ENCODE measurements at regions of chr17 and their contacts with region 1.

Region 1: GRCh38 chr17:50547035-50547735 is at the start of gene SPATA20:
- DNase-seq: peak; percentile 83 to 85 (median 84)
- H3K4me3 ChIP-seq: peak within 1 kb of the TSS; percentile 56 to 63
- H3K4me3 Mint-ChIP-seq: peak within 1 kb of the TSS; percentile 48 to 86 (median 78)
- H3K27ac ChIP-seq: peak within 1 kb of the TSS; percentile 38
- H3K27ac Mint-ChIP-seq: peak within 1 kb of the TSS; percentile 32 to 87 (median 59)
- H3K4me1 ChIP-seq: peaks cover 19% of the 10 kb centered on the region
- H3K4me1 Mint-ChIP-seq: peaks cover 6 to 24% (median 17%) of the 10 kb centered on the region in 4 donors
- H3K27me3 ChIP-seq: no peaks in the 10 kb centered on the region
- H3K27me3 Mint-ChIP-seq: peaks cover 1 to 3% of the 10 kb centered on the region in 2 donors
- total RNA-seq, gene SPATA20: 13.3 to 14.1 TPM

Region 2: DNA sequence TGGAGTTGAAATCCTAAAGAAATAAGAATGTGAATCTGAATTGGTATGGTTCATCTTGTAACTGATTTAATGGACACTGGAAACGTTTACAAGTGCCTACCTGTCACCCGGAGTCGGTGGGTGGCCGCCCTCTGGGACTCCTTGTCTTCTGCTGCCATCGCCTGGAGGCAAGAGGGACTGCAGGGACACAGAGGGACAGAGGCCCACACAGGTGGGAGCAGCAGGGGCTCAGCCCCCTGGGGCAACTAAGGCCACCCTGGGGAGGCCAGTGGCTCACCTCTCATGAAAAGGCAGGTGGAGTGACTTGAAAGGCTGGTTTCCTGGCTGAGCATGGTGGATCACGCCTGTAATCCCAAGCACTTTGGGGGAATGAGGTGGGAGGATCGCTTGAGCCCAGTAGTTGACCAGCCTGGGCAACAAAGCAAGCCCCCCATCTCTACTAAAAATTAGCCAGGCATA is 249.7 kb before region 1 on chr17:
- CTCF ChIA-PET with region 1: no interaction called
- POLR2A ChIA-PET with region 1: no interaction called
- intact Hi-C with region 1: no loop called
- DNase-seq: peak; percentile 73 to 81 (median 75)
- H3K4me3 ChIP-seq: no peak overlapping the region
- H3K4me3 Mint-ChIP-seq: no peak overlapping the region
- H3K27ac ChIP-seq: no peak overlapping the region
- H3K27ac Mint-ChIP-seq: peak overlapping the region in 1 of 7 donors; percentile 47
- H3K4me1 ChIP-seq: no peaks in the 10 kb centered on the region
- H3K4me1 Mint-ChIP-seq: no peaks in the 10 kb centered on the region
- H3K27me3 ChIP-seq: no peaks in the 10 kb centered on the region
- H3K27me3 Mint-ChIP-seq: peaks cover 0 to 4% of the 10 kb centered on the region in 2 donors

Region 3: DNA sequence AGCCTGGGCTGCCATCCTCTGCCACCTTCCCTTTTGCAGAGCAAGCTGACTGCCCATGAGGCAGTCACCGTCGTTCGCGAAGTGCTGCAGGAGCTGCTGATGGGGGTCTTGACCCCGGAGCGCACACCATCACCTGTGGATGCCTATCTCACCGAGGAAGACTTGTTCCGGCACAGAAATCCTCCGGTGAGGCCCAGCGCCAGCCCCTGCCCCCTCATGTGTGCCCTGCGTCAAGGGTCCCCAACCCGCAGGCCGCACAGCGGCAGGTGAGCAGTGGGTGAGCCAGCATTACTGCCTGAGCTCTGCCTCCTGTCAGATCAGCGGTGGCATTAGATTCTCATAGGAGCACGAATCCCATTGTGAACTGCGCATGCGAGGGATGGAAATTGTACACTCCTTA is 22.3 kb before region 1 on chr17:
- CTCF ChIA-PET with region 1: no interaction called
- POLR2A ChIA-PET with region 1: no interaction called
- intact Hi-C with region 1: no loop called
- DNase-seq: no peak
- H3K4me3 ChIP-seq: no peak overlapping the region
- H3K4me3 Mint-ChIP-seq: no peak overlapping the region
- H3K27ac ChIP-seq: no peak overlapping the region
- H3K27ac Mint-ChIP-seq: no peak overlapping the region
- H3K4me1 ChIP-seq: no peaks in the 10 kb centered on the region
- H3K4me1 Mint-ChIP-seq: no peaks in the 10 kb centered on the region
- H3K27me3 ChIP-seq: no peaks in the 10 kb centered on the region
- H3K27me3 Mint-ChIP-seq: peaks cover 11 to 12% of the 10 kb centered on the region in 2 donors

Region 4: GRCh38 chr17:50560185-50560824 is 13.1 kb after region 1 on chr17 and contains the start of gene CACNA1G:
- CTCF ChIA-PET with region 1: interaction called, 3 read pairs
- POLR2A ChIA-PET with region 1: interaction called, 11 read pairs
- intact Hi-C with region 1: loop called (anchors 2 kb)
- DNase-seq: peak; percentile 80 to 87 (median 84)
- H3K4me3 ChIP-seq: peak within 1 kb of the TSS; percentile 29 to 62
- H3K4me3 Mint-ChIP-seq: peak within 1 kb of the TSS; percentile 74 to 87 (median 80)
- H3K27ac ChIP-seq: no peak within 1 kb of the TSS
- H3K27ac Mint-ChIP-seq: peak within 1 kb of the TSS in 2 of 7 donors; percentile 22 to 72
- H3K4me1 ChIP-seq: peaks cover 34% of the 10 kb centered on the region
- H3K4me1 Mint-ChIP-seq: peaks cover 10 to 42% (median 22%) of the 10 kb centered on the region in 4 donors
- H3K27me3 ChIP-seq: peaks cover 23% of the 10 kb centered on the region
- H3K27me3 Mint-ChIP-seq: peaks cover 25 to 35% of the 10 kb centered on the region in 2 donors
- total RNA-seq, gene CACNA1G: not detected

Region 5: DNA sequence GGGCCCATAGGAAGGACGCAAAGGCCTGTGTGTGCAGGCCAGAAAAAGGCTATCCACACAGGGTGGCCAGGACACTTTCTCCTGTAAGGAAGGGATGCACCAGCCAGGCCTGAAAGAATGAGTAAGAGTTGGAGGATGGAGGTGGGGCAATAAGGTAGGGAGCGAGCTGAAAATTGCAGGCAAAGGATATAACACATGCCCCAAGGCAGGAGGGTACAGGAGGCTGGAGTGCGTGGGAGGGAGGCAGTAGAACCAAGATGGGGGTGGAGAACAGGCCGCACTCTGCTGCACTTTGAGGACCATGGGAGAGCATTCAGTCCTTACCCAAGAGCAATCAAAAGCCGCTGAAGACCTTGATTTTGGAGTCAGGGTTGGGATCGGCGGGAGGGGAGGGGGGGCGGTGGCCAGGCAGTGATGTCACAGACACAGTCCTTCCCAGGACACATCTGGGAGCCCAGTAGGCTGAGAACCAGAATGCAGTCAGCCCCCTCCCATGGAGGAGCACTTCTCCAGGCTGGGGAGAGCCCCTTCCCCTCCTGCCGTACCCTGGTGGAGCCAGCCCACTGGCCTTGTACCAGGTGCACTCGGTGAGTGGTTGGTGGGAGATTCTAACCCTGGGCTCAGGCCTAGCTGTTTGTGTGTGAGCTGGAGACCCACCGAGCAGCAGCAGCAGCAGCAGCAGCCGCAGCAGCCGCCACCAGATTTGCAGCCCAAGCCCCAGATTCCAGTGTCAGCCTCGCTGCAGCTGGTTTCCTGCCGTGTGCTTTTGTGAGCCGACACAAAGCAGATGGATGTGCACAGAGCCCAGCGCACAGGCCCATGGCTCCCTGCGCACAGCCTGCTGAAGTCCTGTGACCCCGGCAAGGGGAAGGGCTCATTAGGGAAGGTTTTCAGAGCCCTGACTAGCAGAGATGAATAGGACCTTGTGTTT is 143.0 kb after region 1 on chr17:
- CTCF ChIA-PET with region 1: no interaction called
- POLR2A ChIA-PET with region 1: no interaction called
- intact Hi-C with region 1: loop called (anchors 1 kb)
- DNase-seq: no peak
- H3K4me3 ChIP-seq: no peak overlapping the region
- H3K4me3 Mint-ChIP-seq: no peak overlapping the region
- H3K27ac ChIP-seq: no peak overlapping the region
- H3K27ac Mint-ChIP-seq: peak overlapping the region in 2 of 7 donors; percentile 80 to 85
- H3K4me1 ChIP-seq: no peaks in the 10 kb centered on the region
- H3K4me1 Mint-ChIP-seq: peaks cover 0 to 4% (median under 1%) of the 10 kb centered on the region in 4 donors
- H3K27me3 ChIP-seq: no peaks in the 10 kb centered on the region
- H3K27me3 Mint-ChIP-seq: no peaks in the 10 kb centered on the region

Region 6: GRCh38 chr17:50816771-50817751 is 269.9 kb after region 1 on chr17:
- CTCF ChIA-PET with region 1: no interaction called
- POLR2A ChIA-PET with region 1: no interaction called
- intact Hi-C with region 1: loop called (anchors 1 kb)
- DNase-seq: peak in 4 of 5 donors; percentile 40 to 57 (median 52)
- H3K4me3 ChIP-seq: no peak overlapping the region
- H3K4me3 Mint-ChIP-seq: peak overlapping the region in 4 of 8 donors; percentile 9 to 61 (median 18)
- H3K27ac ChIP-seq: no peak overlapping the region
- H3K27ac Mint-ChIP-seq: peak overlapping the region in 1 of 7 donors; percentile 1
- H3K4me1 ChIP-seq: peaks cover 6% of the 10 kb centered on the region
- H3K4me1 Mint-ChIP-seq: peaks cover 3 to 10% (median 5%) of the 10 kb centered on the region in 4 donors
- H3K27me3 ChIP-seq: no peaks in the 10 kb centered on the region
- H3K27me3 Mint-ChIP-seq: peaks cover 0 to 12% of the 10 kb centered on the region in 2 donors